Transverse colon (tissue), 4 donors: ENCODE measurements at regions of chr2 and their contacts with region 1.

Region 1: DNA sequence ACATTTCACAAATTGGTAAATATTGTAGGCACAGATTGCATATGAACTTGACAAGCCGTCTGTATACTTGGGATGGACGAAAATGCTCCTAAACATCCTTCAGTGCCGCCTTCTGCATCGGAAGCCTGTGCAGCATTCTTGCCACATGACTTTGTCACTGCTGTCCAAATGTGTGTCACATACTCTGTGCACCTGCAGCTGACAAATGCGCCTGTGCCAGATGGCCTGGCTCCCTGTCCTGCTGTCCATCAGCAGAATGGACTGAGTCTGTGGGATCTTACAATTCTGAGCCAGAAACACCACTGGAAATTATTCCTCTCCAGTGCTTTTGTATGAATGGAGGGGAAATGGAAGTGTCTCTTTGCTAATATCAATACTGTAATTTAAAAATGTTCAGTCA is 89.9 kb downstream of the DCDC2C start:
- DNase-seq: no peak
- H3K4me3 ChIP-seq: no peak overlapping the region
- H3K27ac ChIP-seq: no peak overlapping the region
- H3K4me1 ChIP-seq: no peaks in the 10 kb centered on the region
- H3K27me3 ChIP-seq: no peaks in the 10 kb centered on the region
- CTCF ChIP-seq: no peak
- EP300 ChIP-seq: no peak
- POLR2A ChIP-seq: no peak

Region 2: DNA sequence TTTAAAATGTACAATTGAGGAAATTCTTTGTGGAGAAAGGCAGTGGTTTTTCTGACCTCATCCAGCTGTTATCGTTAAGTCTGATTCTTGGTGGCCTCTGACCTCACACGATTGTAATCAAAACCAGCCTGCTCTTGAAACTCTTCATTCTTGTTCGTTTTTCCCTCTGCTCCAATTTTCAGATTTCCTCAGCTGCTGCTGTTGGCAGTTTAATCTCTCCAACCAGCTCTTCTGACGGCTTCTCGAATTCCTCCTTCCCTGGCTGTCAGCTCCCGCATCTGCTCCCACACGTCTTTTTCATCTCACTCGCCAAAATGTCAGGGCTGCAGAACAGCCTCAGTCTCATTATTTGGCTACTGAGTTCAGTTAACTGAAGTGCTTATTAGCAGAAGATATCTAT is 46.2 kb after region 1 on chr2:
- in situ Hi-C with region 1: no loop called
- intact Hi-C with region 1: loop called (anchors 5 kb)
- DNase-seq: no peak
- H3K4me3 ChIP-seq: no peak overlapping the region
- H3K27ac ChIP-seq: no peak overlapping the region
- H3K4me1 ChIP-seq: no peaks in the 10 kb centered on the region
- H3K27me3 ChIP-seq: no peaks in the 10 kb centered on the region
- CTCF ChIP-seq: no peak
- EP300 ChIP-seq: no peak
- POLR2A ChIP-seq: no peak